HepG2 (cell line): ENCODE measurements at regions of chr5 and their contacts with region 1.

Region 1: DNA sequence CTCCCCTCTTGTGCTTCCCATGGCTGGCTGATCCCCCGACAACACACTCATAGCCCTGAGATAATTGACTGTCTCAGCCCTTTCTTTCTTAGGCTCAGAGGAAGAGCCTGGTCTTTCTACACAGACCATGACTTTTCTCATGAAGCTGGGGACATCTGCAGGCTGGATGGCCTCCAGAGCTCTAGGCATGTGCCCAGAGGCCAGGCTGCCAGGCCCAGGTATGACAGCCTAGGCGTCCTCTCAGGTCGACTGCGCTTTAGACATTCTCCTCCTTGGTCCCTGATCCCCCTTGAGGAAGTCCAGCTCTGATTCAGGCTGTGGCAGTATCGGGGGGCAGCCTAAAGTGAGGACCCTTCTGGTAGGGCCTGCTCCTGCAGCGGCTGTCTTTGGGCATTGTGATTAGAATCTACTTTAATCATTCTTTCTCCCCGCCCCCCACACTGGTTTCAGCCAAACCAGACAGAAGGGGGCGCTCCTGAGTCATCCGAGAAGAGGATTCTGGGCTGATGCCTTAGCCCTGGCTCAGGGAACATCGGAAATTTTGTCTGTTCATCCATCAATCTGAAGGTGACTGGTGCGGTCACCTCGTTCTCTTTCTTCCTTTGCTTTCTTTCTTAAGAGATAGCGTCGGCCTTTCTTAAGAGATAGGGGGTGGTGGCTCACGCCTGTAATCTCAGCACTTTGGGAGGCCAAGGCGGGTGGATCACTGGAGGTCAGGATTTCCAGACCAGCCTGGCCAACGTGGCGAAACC is 66.5 kb upstream of the HSPA9 start:
- DNase-seq: peak; percentile 50
- ATAC-seq: peak; percentile 81
- H3K4me3 ChIP-seq: no peak overlapping the region
- H3K27ac ChIP-seq: no peak overlapping the region
- H3K4me1 ChIP-seq: peaks cover 16% of the 10 kb centered on the region; the same call in 1 of the 2 replicates
- H3K27me3 ChIP-seq: peaks cover 4 to 47% of the 10 kb centered on the region in 2 experiments
- CTCF ChIP-seq: peak; percentile 81
- EP300 ChIP-seq: no peak
- POLR2A ChIP-seq: no peak
- RAD21 ChIP-seq: peak; percentile 72

Region 2: DNA sequence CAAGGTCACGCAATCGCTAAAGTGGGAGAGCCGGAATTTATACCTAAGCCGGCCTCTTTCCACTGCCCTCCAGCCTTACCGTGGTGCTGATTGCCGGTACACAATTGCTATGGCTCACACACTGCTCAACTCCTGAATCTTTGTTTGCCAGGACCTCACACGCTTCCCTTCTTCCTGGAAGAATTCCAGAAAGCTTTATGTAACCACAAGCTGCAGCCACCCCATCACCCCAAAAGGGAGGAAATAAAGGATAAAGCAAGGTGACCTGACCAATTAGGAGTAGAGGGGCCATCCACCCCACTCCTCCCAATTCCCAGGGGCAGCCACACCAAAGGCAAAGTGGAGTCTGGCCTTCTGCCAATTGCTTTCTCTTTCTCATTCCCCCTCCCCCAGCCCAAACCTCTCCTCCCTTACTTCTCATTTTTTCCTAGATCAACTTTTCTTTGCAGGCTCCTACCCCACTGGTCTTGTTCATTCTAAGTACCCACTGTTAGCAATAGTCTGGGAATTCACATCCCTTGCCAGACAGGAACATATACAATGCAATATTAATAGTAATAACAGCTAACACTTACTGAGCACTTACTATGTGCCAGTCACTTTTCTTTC is 410.6 kb before region 1 on chr5:
- CTCF ChIA-PET with region 1: no interaction called
- POLR2A ChIA-PET with region 1: no interaction called
- in situ Hi-C with region 1: no loop called
- intact Hi-C with region 1: no loop called
- DNase-seq: peak; percentile 18
- ATAC-seq: peak; percentile 86
- H3K4me3 ChIP-seq: peak overlapping the region in 1 of 3 experiments; percentile 4; a peak in 1 of 6 replicates
- H3K27ac ChIP-seq: no peak overlapping the region
- H3K4me1 ChIP-seq: peaks cover 28% of the 10 kb centered on the region
- H3K27me3 ChIP-seq: no peaks in the 10 kb centered on the region
- CTCF ChIP-seq: no peak
- EP300 ChIP-seq: no peak
- POLR2A ChIP-seq: no peak
- RAD21 ChIP-seq: no peak

Region 3: GRCh38 chr5:138470322-138471193 is 171.2 kb before region 1 on chr5:
- CTCF ChIA-PET with region 1: no interaction called
- POLR2A ChIA-PET with region 1: no interaction called
- in situ Hi-C with region 1: no loop called
- intact Hi-C with region 1: no loop called
- DNase-seq: no peak
- ATAC-seq: peak; percentile 7
- H3K4me3 ChIP-seq: no peak overlapping the region
- H3K27ac ChIP-seq: no peak overlapping the region
- H3K4me1 ChIP-seq: peaks cover 51% of the 10 kb centered on the region
- H3K27me3 ChIP-seq: 0 out of 5 replicates have a peak, but pooled peaks cover 0 to 2% of the 10 kb centered on the region in 2 experiments
- CTCF ChIP-seq: no peak
- EP300 ChIP-seq: no peak
- POLR2A ChIP-seq: peak in 1 of 2 experiments; percentile 80; a peak in 1 of 4 replicates
- RAD21 ChIP-seq: no peak

Region 4: DNA sequence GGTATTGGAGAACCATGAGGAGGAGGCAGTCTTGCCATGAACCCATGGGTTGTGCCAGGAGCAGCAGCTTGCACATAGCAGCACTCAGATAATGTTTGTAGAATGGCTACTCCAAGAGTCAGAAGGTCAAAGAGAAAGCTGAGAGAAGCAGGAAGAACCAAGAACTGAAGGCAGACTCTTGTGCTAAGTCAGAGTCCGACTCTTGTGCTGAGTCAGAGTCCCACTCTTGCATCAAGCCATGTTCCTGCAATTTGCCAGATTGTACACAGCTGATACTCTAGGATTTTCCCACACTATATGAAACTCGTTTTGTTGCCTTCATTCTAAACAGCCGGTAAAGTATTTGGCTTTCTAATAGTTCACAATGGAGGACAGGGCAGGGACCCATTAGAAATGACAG is 40.3 kb before region 1 on chr5:
- CTCF ChIA-PET with region 1: no interaction called
- POLR2A ChIA-PET with region 1: no interaction called
- in situ Hi-C with region 1: no loop called
- intact Hi-C with region 1: no loop called
- DNase-seq: no peak
- ATAC-seq: no peak
- H3K4me3 ChIP-seq: no peak overlapping the region
- H3K27ac ChIP-seq: no peak overlapping the region
- H3K4me1 ChIP-seq: peaks cover 7% of the 10 kb centered on the region; the same call in 1 of the 2 replicates
- H3K27me3 ChIP-seq: peaks cover 0 to 31% of the 10 kb centered on the region in 2 experiments; a peak in 1 of 5 replicates
- CTCF ChIP-seq: no peak
- EP300 ChIP-seq: no peak
- POLR2A ChIP-seq: no peak
- RAD21 ChIP-seq: no peak

Region 5: DNA sequence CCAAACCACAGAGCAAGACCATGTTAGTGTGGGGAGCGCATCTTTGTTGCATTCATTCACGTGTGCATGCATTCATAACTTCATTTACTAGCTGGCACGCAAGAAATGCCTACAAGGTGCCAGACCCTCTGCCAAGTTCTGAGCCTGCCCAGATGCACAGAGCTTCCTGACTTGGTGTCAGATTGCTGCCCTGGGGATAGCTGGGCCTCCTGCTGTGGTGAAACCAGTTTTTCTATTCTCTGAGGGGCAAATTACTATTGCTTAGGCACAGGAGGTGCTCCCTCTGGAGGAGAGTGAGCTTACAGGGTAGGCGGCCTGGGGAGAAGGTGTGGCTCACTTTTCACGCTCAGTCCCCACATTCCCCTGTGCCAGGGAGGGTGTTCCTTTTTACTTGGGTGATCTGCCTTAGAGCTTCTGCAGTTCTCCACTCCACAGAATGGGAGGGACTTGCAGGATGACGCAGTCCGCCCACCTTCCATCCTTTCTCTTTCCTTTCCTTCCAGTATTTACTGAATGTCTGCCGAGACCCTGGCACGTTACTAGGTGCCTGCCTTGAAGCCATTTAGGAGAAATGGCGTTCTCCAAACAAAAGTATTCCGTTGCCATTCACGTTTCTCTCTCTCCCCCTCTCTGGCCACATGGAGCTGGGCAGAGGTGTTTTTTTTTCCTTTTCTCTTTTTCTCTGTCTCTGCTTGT is 83.6 kb after region 1 on chr5:
- CTCF ChIA-PET with region 1: no interaction called
- POLR2A ChIA-PET with region 1: no interaction called
- in situ Hi-C with region 1: no loop called
- intact Hi-C with region 1: loop called (anchors 2 kb)
- DNase-seq: peak; percentile 57
- ATAC-seq: peak; percentile 80
- H3K4me3 ChIP-seq: peak overlapping the region; percentile 26 to 49 (median 31); a peak in 5 of 6 replicates
- H3K27ac ChIP-seq: peak overlapping the region; percentile 90
- H3K4me1 ChIP-seq: peaks cover 76% of the 10 kb centered on the region
- H3K27me3 ChIP-seq: no peaks in the 10 kb centered on the region; a peak in 1 of 5 replicates
- CTCF ChIP-seq: peak; percentile 68
- EP300 ChIP-seq: no peak
- POLR2A ChIP-seq: 0 out of 4 replicates have a peak, but pooled peaks of 1 of the 2 experiments have one; percentile 28
- RAD21 ChIP-seq: peak; percentile 40; the same call in 1 of the 2 replicates

Region 6: GRCh38 chr5:138775034-138775433 is 133.3 kb after region 1 on chr5:
- CTCF ChIA-PET with region 1: no interaction called
- POLR2A ChIA-PET with region 1: no interaction called
- in situ Hi-C with region 1: no loop called
- intact Hi-C with region 1: loop called (anchors 2 kb)
- DNase-seq: peak; percentile 86
- ATAC-seq: peak; percentile 82
- H3K4me3 ChIP-seq: peak overlapping the region in 2 of 3 experiments; percentile 11 to 15; a peak in 2 of 6 replicates
- H3K27ac ChIP-seq: peak overlapping the region; percentile 35
- H3K4me1 ChIP-seq: peaks cover 55% of the 10 kb centered on the region
- H3K27me3 ChIP-seq: no peaks in the 10 kb centered on the region
- CTCF ChIP-seq: no peak
- EP300 ChIP-seq: peak in 1 of 2 experiments; percentile 48; a peak in 1 of 4 replicates
- POLR2A ChIP-seq: no peak
- RAD21 ChIP-seq: no peak

Region 7: GRCh38 chr5:138927979-138928378 is 286.3 kb after region 1 on chr5:
- CTCF ChIA-PET with region 1: no interaction called
- POLR2A ChIA-PET with region 1: no interaction called
- in situ Hi-C with region 1: no loop called
- intact Hi-C with region 1: loop called (anchors 5 kb)
- DNase-seq: peak; percentile 32
- ATAC-seq: peak; percentile 54
- H3K4me3 ChIP-seq: no peak overlapping the region
- H3K27ac ChIP-seq: no peak overlapping the region
- H3K4me1 ChIP-seq: peaks cover 12% of the 10 kb centered on the region
- H3K27me3 ChIP-seq: no peaks in the 10 kb centered on the region
- CTCF ChIP-seq: no peak
- EP300 ChIP-seq: no peak
- POLR2A ChIP-seq: no peak
- RAD21 ChIP-seq: no peak